IMR-90 (cell line): ENCODE measurements at regions of chr5 and their contacts with region 1.

Region 1: DNA sequence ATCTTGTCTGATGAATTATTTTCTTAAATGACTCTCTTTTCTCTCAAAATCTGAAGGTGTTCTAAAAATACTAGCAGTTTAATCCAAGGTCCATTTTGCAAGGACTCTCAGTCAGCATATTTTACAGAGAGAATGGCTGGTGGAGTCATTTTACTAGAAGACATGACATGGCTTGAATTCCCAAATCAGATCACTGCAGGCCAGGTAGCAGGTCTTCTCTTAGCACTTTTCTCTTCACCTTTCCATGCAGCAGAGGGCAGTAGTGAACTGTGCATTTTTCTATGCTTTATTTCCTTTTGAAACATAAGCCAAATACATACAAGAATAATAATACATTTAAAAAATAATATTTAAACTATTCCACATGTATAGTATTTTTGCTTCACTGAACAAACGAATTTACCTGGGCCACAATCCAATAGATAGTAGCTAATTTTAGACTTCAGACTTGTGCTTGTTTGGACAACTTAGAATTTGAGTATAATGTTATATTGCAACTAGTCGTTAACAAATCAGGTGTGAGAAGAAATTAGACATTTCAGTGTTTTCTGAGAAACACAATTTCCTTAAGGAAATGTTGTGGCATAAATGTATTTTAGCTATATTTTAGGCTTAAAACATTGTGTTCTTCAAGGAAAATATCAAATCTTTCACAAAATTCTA is 289.4 kb upstream of the DAB2 start:
- DNase-seq: peak; percentile 68
- ATAC-seq: peak; percentile 69; the same call in 1 of the 2 replicates
- H3K4me3 ChIP-seq: no peak overlapping the region
- H3K27ac ChIP-seq: no peak overlapping the region
- H3K4me1 ChIP-seq: peaks cover 8% of the 10 kb centered on the region
- H3K27me3 ChIP-seq: no peaks in the 10 kb centered on the region
- CTCF ChIP-seq: peak; percentile 84
- POLR2A ChIP-seq: no peak
- RAD21 ChIP-seq: peak; percentile 89

Region 2: GRCh38 chr5:39948867-39949468 is 234.8 kb after region 1 on chr5:
- CTCF ChIA-PET with region 1: interaction called, 5 read pairs
- POLR2A ChIA-PET with region 1: interaction called, 3 read pairs
- dilution Hi-C with region 1: no loop called
- in situ Hi-C with region 1: loop called (anchors 5 kb)
- intact Hi-C with region 1: loop called (anchors 2 kb)
- DNase-seq: peak; percentile 76
- ATAC-seq: peak; percentile 77
- H3K4me3 ChIP-seq: no peak overlapping the region
- H3K27ac ChIP-seq: no peak overlapping the region
- H3K4me1 ChIP-seq: no peaks in the 10 kb centered on the region
- H3K27me3 ChIP-seq: no peaks in the 10 kb centered on the region
- CTCF ChIP-seq: peak; percentile 70
- POLR2A ChIP-seq: no peak
- RAD21 ChIP-seq: peak; percentile 78

Region 3: DNA sequence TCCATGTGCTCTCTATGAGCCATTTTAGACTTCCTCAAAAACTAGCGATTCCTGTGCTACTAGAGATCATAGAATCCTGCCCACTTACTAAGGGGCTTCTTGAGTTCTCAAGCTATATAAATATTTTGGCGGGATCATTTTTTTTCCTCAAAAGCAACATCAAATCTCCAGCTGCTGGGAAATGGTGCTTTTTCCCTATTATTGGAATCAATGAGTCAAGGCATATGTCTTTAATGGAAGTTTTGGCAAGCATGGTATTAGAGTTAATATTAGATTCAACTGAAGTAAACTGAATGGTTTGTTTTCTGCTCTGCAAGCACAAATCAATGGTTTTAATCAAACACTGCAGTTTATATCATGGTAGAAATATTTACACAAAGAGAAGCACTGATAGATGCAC is 595.7 kb after region 1 on chr5:
- CTCF ChIA-PET with region 1: no interaction called
- POLR2A ChIA-PET with region 1: no interaction called
- dilution Hi-C with region 1: no loop called
- in situ Hi-C with region 1: no loop called
- intact Hi-C with region 1: no loop called
- DNase-seq: no peak
- ATAC-seq: no peak
- H3K4me3 ChIP-seq: no peak overlapping the region
- H3K27ac ChIP-seq: no peak overlapping the region
- H3K4me1 ChIP-seq: no peaks in the 10 kb centered on the region
- H3K27me3 ChIP-seq: no peaks in the 10 kb centered on the region
- CTCF ChIP-seq: no peak
- POLR2A ChIP-seq: no peak
- RAD21 ChIP-seq: no peak

Region 4: GRCh38 chr5:40399349-40399748 is 685.2 kb after region 1 on chr5:
- CTCF ChIA-PET with region 1: no interaction called
- POLR2A ChIA-PET with region 1: no interaction called
- dilution Hi-C with region 1: no loop called
- in situ Hi-C with region 1: no loop called
- intact Hi-C with region 1: loop called (anchors 10 kb)
- DNase-seq: peak; percentile 71
- ATAC-seq: peak; percentile 88
- H3K4me3 ChIP-seq: no peak overlapping the region
- H3K27ac ChIP-seq: no peak overlapping the region
- H3K4me1 ChIP-seq: peaks cover 4% of the 10 kb centered on the region; the same call in 1 of the 2 replicates
- H3K27me3 ChIP-seq: no peaks in the 10 kb centered on the region
- CTCF ChIP-seq: no peak
- POLR2A ChIP-seq: no peak
- RAD21 ChIP-seq: no peak

Region 5: DNA sequence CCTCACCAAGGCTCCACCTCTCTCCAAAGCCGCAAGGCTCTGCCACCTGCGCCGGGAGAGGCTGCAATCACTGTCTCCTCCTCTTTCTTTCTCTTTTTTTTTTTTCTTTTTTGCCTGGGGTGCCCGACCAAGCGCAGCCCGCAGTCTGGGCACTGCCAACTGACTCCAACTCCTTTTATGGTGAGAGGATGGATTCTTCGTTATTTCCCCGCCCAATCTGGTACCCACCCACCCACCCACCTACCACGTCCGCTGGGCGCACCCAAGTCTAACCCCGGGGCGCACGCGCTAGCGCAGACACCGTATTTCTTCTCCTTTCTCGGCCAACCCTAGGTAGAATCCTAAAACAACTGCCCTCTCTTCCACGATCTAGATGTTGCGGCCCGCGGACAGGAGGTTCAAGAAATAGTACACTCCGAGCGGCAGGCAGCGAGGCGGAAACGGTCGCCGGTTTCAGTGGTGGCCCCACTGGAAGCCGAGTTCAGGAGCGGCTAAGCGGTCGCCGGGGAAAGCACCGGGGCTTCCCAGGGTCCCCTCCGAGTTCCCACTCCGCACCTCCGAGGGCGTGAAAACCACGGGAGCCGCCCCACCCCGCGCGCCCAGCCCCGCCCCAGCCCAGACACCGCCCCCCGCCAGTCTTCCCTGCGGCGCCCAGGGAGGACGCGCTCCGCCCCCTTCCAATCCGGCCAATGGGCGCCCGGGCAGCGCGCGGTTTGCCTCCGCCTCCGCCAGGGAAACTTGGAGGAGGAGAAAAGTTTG is 965.2 kb after region 1 on chr5:
- CTCF ChIA-PET with region 1: interaction called, 4 read pairs
- POLR2A ChIA-PET with region 1: no interaction called
- dilution Hi-C with region 1: no loop called
- in situ Hi-C with region 1: no loop called
- intact Hi-C with region 1: loop called (anchors 2 kb)
- DNase-seq: peak; percentile 86
- ATAC-seq: peak; percentile 89
- H3K4me3 ChIP-seq: peak overlapping the region; percentile 94
- H3K27ac ChIP-seq: peak overlapping the region; percentile 98
- H3K4me1 ChIP-seq: peaks cover 13% of the 10 kb centered on the region
- H3K27me3 ChIP-seq: no peaks in the 10 kb centered on the region
- CTCF ChIP-seq: no peak
- POLR2A ChIP-seq: peak; percentile 51
- RAD21 ChIP-seq: no peak

Region 6: DNA sequence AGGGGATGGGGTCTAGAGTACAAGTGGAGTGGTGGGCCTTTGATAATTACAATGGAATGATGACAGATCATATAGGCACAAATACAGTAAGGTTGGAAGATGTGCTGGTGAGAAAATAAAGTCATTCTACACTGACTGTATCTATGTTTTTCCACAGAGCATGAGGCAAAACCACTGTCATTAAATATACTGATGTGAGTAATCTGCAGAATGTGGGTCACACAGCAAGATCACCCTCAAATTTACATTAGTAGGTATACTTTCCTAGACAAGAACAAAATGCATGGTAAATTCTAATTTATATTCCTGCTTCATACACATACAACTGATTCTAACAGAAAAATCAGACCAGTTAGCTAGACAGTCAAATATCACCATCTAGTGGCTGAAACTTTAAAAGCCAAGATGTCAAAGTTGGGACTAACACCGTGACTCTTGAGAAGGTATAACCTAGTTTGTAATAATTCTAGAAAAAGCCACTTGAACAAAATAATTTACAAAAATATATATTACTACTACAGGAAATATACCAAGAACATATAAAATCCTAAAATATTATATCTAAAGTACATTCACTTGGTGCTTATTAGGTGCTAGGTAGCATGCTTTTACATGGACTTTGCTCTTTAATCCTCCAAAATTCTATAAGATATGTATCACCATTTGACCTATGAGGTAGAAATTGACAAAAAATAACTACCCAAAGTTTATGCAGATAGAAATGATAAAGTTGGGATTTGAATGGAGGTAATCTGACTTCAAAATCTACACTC is 1022.1 kb after region 1 on chr5:
- CTCF ChIA-PET with region 1: no interaction called
- POLR2A ChIA-PET with region 1: no interaction called
- dilution Hi-C with region 1: no loop called
- in situ Hi-C with region 1: loop called (anchors 5 kb)
- intact Hi-C with region 1: loop called (anchors 1 kb)
- DNase-seq: peak; percentile 74
- ATAC-seq: peak; percentile 74
- H3K4me3 ChIP-seq: no peak overlapping the region
- H3K27ac ChIP-seq: no peak overlapping the region
- H3K4me1 ChIP-seq: peaks cover 14% of the 10 kb centered on the region
- H3K27me3 ChIP-seq: no peaks in the 10 kb centered on the region
- CTCF ChIP-seq: peak; percentile 88
- POLR2A ChIP-seq: no peak
- RAD21 ChIP-seq: peak; percentile 89